ENCODE measurements at regions of chr2 and their contacts with region 1.

Region 1: GRCh38 chr2:126776692-126777619 is 121.0 kb downstream of the GYPC start:
- DNase-seq: peak; percentile 55
- H3K4me3 Mint-ChIP-seq: peak overlapping the region; percentile 71
- H3K27ac Mint-ChIP-seq: no peak overlapping the region
- H3K4me1 Mint-ChIP-seq: peaks cover 6% of the 10 kb centered on the region
- H3K27me3 Mint-ChIP-seq: peaks cover 57% of the 10 kb centered on the region
- CTCF ChIP-seq: peak; percentile 78

Region 2: DNA sequence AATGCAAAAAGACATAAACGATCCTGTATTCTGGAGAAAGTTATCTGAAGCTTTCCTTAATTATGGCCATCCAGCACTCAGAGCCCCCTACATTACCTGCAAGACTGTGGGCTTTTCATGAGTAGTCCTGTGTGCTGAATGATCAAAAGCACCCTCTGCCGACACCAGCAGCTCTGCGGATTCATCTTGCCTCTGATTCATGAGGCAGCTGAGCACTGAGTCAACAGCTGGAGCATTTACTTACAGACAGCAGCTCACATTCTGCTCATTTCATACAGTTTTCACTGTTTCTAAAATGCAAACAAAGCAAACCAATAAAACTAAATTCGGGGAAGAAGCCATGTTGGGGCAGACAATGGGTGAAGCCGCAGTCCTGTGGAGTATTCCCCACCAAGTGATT is 1865.4 kb before region 1 on chr2:
- CTCF ChIA-PET with region 1: no interaction called
- POLR2A ChIA-PET with region 1: no interaction called
- intact Hi-C with region 1: loop called (anchors 10 kb)
- DNase-seq: peak; percentile 28
- H3K4me3 Mint-ChIP-seq: no peak overlapping the region
- H3K27ac Mint-ChIP-seq: no peak overlapping the region
- H3K4me1 Mint-ChIP-seq: peaks cover 25% of the 10 kb centered on the region
- H3K27me3 Mint-ChIP-seq: no peaks in the 10 kb centered on the region
- CTCF ChIP-seq: no peak

Region 3: DNA sequence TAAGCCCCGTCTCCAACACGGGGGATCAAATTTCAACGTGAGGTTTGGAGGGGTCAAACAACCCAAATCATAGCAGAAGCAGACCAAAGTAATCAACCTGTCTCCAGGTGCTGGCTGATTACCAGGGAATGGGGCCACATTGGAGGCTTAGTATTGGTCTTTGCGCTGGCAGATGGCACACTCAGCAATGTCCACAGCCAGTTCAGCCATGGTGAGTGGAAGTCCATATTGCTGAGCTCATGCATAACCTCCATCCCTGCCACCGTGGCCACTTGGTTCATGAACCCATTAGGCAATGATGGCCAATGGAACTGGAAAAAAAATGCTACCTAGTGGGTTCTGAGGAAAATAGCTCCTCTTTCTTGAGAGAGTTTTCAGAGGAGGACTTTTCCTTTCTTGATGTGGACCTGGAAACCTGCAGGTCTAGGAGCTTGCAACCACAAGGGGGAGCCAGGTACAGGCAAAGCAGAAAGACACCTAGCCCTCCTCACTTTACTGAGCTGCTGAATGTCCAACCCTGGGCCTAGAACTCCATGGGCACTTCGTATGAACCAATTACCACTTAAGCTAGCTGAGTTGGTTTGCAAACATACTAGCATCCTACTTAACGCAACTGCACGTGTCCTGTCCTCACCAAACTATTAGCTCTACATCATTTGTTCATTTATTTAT is 249.0 kb before region 1 on chr2:
- CTCF ChIA-PET with region 1: interaction called, 30 read pairs
- POLR2A ChIA-PET with region 1: no interaction called
- intact Hi-C with region 1: loop called (anchors 1 kb)
- DNase-seq: peak; percentile 57
- H3K4me3 Mint-ChIP-seq: no peak overlapping the region
- H3K27ac Mint-ChIP-seq: no peak overlapping the region
- H3K4me1 Mint-ChIP-seq: no peaks in the 10 kb centered on the region
- H3K27me3 Mint-ChIP-seq: no peaks in the 10 kb centered on the region
- CTCF ChIP-seq: peak; percentile 12

Region 4: DNA sequence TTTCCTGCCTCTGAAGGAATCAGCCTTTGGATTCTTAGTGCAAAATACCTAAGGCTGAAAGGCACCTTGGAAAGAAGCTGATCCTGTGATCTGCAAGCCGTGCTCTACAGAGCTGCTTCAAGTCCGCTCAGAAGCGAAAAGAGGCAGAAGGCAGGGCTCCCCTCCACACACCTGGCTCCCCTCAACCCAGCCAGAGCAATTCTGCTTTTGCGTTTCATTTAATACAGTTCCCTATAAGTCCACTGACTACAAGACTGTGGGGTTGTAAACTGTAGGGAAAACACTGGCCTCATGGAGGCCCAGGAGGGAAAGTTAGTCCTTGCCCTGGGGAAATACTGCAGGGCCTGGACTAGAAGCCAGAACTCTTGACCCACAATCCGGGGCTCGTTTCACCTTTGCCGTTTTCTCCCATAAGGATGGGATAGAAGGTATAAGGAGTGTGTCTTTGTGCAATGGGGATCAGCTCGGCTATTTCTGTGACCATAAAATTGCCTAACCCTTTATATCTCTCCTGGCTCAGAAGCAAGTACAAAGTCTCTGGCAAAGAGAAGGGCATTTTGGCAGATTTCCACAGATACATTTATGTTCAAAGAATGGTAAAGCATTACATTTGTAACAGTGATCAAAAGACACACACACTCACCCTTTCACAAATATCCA is 25.9 kb after region 1 on chr2:
- CTCF ChIA-PET with region 1: no interaction called
- POLR2A ChIA-PET with region 1: no interaction called
- intact Hi-C with region 1: no loop called
- DNase-seq: peak; percentile 47
- H3K4me3 Mint-ChIP-seq: no peak overlapping the region
- H3K27ac Mint-ChIP-seq: no peak overlapping the region
- H3K4me1 Mint-ChIP-seq: peaks cover 6% of the 10 kb centered on the region
- H3K27me3 Mint-ChIP-seq: peaks cover 46% of the 10 kb centered on the region
- CTCF ChIP-seq: no peak

Region 5: DNA sequence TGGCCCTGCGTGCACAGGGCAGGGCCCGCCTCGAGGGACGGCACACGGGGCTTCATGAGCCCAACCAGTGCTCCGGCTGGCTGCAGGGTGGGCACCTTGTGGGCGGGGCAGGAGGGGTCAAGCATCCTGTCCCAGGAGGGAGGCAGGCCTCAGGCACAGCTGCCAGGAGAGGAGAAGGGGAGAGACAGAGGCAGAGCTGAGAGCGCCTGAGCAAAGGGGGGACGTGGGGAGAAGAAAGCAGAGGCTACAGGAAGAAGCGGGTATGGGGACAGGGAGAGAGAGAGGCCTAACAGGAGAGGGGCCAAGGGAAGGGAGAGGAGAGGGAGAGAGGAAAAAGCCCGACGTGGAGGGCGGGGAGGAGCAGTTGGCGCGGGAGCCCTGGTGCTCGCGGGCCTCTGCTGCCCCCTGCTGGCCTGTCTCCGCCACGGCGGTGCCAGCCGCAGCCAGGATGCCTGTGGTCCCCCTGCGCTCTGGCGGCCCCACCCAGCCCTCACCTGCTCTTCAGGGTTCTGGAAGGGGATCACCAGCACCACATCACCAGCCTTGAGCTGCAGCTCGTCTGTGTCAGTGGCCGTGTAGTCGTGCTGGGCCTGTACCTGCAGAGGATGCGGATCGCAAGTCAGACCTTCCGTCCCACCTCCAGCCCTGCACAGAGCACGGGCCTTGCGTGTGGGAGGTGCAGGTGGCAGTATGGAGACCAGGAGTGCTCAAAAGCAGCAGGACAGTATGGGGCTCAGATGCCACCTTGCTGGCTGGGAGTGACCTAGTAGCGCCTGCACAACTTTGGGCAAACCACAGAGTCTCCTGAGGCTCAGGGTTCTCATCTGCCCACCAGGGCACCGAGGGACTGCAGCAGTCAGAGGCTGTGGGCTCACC is 273.2 kb after region 1 on chr2:
- CTCF ChIA-PET with region 1: no interaction called
- POLR2A ChIA-PET with region 1: no interaction called
- intact Hi-C with region 1: loop called (anchors 5 kb)
- DNase-seq: peak; percentile 53
- H3K4me3 Mint-ChIP-seq: no peak overlapping the region
- H3K27ac Mint-ChIP-seq: no peak overlapping the region
- H3K4me1 Mint-ChIP-seq: no peaks in the 10 kb centered on the region
- H3K27me3 Mint-ChIP-seq: no peaks in the 10 kb centered on the region
- CTCF ChIP-seq: peak; percentile 98